Left ventricle myocardium superior (tissue), 1 donor: ENCODE measurements at regions of chr3 and their contacts with region 1.

Region 1: DNA sequence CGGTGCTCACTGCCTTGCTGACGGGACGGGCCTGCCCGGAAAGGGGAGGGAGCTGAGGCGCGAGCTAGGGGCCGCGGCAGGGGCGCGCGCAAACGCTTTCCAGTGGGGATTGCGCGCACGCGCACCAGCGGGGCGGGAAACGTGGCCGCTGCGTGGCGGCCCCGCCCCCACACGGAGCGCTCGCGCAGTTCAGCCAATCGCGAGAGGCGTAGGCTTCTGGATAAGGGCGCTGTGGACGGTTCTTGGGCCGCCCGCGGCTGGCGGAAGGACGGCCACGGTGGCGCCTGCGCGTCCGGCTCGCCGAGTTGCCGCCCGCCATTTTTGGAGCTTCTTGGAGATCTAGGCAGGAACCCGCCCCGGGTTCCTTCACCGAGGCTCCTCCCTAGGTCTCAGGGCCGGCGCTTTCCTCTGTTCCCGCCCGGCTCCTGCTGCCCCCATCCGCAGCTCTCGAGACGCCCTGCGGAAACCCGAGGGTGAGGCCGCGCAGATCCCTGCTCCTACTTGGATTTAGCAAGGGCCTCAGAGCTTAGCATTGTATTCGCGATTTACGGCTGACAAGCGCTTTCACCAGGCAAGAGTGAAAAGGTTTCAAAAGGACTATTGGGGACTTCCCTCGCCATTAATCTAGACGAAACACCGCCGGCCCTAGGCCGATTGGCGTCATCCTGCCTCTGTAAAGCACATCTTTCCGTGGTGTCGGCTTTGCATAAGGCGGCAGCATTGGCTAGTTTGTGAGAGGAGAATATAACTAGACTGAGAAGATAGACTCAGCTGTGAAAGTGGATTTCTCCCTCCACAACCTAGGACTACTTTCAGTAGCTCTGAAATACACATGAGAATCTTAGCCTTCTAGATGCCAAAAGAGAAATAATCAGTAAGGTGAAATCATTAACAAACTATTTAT is 496 bp upstream of the STAG1 start:
- DNase-seq: peak; percentile 100
- ATAC-seq: peak; percentile 95

Region 2: DNA sequence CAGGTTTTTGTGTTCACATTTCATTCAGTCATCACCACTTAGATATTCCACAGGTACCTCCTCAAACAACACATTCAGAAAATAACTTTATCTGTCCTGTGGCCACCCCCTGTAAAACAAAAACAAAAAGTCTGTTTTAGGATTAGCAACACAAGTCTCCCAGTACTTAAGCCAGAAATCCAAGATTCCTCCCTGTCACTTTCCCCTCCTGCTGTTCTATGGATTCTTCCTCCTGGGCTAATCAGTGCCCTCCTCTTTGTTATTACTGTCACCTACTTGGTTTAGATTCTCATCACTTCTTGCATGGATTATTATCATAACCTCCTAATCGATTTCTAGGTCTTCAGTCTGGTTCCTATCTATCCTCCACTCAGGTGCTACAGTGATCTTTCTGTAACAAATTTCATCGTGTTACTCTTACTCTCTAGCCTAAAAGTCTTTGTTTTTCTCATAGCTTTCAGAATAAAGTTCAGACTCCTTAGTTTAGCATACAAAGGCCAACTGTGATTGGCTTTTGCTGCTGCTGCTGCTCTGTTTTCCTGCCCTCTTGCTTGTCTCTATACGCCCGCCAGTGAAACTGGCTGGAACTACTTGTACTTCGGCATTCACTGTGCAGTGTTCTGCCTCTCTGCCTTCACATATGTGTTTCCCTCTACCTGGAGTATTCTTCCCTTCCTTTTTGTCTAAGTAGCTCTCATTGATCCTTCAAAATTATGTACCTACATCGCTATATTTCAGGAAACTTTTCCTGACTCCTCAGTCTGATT is 754.9 kb before region 1 on chr3:
- intact Hi-C with region 1: no loop called
- DNase-seq: no peak
- ATAC-seq: no peak

Region 3: GRCh38 chr3:136075218-136075808 is 677.4 kb before region 1 on chr3:
- intact Hi-C with region 1: loop called (anchors 10 kb)
- DNase-seq: peak; percentile 60
- ATAC-seq: peak; percentile 81

Region 4: DNA sequence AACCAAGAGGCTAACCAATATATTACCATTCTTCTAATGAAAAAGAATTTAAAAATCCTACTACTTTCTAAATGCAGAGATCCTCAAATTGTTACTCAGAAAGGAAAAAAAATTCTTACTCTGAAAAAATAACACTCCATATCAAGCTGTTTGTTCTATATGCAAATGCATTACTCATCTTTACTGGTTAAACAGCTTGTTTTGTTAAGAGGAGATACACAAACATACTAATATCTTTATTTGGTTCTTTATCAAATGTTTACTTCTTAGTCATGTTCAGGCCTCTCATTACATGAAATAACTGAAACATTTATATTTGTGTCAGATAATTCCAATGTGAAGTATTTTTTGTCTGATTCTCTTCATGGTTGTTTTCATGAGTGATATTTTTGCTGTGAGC is 355.8 kb before region 1 on chr3:
- intact Hi-C with region 1: loop called (anchors 10 kb)
- DNase-seq: no peak
- ATAC-seq: no peak

Region 5: GRCh38 chr3:136584728-136585127 is 167.9 kb before region 1 on chr3:
- intact Hi-C with region 1: no loop called
- DNase-seq: no peak
- ATAC-seq: no peak

Region 6: DNA sequence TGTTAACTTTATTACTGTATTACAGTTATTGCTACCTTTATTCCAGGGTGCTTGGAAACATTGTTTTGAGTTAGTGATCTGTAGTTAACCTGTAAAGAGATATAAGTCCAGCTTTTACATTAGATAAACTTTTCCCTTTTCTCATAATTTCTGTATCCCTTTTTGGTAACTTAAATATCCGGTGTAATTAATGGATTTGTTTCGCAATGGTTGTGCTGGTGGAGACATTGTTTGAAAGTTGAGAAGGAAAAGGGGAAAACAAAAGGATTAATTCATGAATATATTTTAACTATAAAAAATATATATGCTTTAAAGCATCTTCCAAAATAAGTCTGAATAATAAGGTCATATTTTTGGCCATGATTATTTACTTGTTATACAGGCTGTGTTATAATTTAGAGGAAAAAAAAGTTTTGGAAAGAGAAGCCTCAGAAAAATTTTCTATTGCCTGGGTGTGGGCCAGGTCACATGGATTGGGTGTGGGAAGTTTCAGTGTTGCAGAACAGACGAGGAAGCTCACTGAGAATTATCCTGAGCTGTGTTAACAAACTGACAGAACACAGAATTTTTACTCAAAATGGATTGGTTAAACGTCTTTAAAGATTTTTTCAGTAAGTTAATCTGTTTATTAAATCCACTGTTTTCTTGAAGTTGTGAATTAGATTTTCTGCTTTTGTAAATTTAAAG is 177.5 kb after region 1 on chr3:
- intact Hi-C with region 1: no loop called
- DNase-seq: peak; percentile 55
- ATAC-seq: peak; percentile 76

Region 7: GRCh38 chr3:136994772-136995516 is 242.3 kb after region 1 on chr3:
- intact Hi-C with region 1: no loop called
- DNase-seq: peak; percentile 85
- ATAC-seq: peak; percentile 95

Region 8: GRCh38 chr3:137013955-137014688 is 261.4 kb after region 1 on chr3:
- intact Hi-C with region 1: loop called (anchors 5 kb)
- DNase-seq: peak; percentile 89
- ATAC-seq: peak; percentile 98